Activated CD4-positive, alpha-beta T cell treated with anti-CD3 and anti-CD28 coated beads for 36 hours (primary cell): ENCODE measurements at regions of chr2 and their contacts with region 1.

Region 1: GRCh38 chr2:170409164-170409535 is 231.2 kb downstream of the MYO3B start:
- DNase-seq: peak; percentile 88
- ATAC-seq: peak; percentile 65
- H3K4me3 Mint-ChIP-seq: peak overlapping the region; percentile 11
- H3K27ac Mint-ChIP-seq: no peak overlapping the region
- H3K4me1 Mint-ChIP-seq: peaks cover 5% of the 10 kb centered on the region
- H3K27me3 Mint-ChIP-seq: peaks cover 16% of the 10 kb centered on the region

Region 2: DNA sequence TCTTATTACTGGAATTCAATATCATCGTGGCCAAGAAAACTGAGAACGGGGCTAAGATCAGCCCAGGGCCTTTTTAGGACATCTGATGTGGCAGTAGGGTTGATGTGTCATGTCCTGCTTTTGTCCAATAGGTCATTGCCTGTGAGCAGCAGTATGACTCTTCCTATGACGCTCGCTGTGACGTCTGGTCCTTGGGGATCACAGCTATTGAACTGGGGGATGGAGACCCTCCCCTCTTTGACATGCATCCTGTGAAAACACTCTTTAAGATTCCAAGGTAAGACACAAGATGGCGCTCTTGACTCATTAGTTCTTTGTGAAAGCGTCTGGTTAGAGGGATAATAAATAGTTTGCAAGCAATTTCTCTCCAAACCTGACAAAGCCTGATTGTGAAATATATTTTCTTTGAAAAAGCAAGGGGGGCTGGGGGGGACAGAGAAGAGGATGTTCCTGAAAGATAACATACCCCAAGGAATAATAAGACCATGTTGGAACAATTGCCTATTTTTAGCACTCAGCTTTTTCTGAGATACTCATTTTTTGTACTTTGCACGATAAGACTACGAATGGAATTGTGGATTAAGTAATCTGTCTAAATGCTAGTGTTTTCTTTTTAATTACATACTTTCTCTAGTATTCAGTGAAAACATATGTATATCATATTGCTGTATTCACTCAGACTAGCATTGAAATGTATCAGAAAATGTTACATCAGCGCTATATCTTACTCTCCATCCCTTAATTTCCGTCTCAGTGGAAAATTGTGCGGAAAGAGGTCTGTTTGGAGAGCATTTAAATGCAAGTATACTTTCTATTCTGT is 173.1 kb before region 1 on chr2:
- CTCF ChIA-PET with region 1: no interaction called
- POLR2A ChIA-PET with region 1: no interaction called
- intact Hi-C with region 1: loop called in 1 of 2 experiments (anchors 2 kb)
- DNase-seq: peak; percentile 46
- ATAC-seq: peak; percentile 63
- H3K4me3 Mint-ChIP-seq: no peak overlapping the region
- H3K27ac Mint-ChIP-seq: no peak overlapping the region
- H3K4me1 Mint-ChIP-seq: no peaks in the 10 kb centered on the region
- H3K27me3 Mint-ChIP-seq: peaks cover 15% of the 10 kb centered on the region

Region 3: GRCh38 chr2:170369894-170370293 is 39.3 kb before region 1 on chr2:
- CTCF ChIA-PET with region 1: interaction called, 13 read pairs
- POLR2A ChIA-PET with region 1: no interaction called
- intact Hi-C with region 1: no loop called
- DNase-seq: no peak
- ATAC-seq: no peak
- H3K4me3 Mint-ChIP-seq: no peak overlapping the region
- H3K27ac Mint-ChIP-seq: no peak overlapping the region
- H3K4me1 Mint-ChIP-seq: peaks cover 42% of the 10 kb centered on the region
- H3K27me3 Mint-ChIP-seq: peaks cover 28% of the 10 kb centered on the region

Region 4: DNA sequence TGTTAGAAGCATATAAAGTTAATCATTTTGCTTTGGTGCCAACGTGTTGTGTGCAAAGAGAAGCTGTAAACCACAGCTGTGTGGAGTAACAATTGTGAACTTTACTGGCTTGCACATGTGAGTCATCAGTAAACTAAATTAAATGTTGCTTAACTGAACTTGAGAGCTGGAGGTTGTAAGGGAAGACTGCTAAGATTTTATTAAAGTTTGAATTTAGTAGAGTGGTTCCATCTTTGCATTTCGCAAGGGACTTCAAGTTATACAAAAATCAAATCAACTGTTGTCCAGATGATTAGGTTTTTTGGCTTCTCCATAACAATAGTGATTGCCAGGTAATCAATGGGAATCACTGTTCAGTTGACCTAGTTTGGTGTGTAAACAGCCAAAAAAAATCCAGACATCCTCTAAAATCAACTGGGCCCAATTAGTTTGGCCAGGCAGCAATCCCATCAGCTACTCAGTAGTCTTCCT is 16.2 kb after region 1 on chr2:
- CTCF ChIA-PET with region 1: interaction called, 21 read pairs
- POLR2A ChIA-PET with region 1: no interaction called
- intact Hi-C with region 1: no loop called
- DNase-seq: no peak
- ATAC-seq: no peak
- H3K4me3 Mint-ChIP-seq: no peak overlapping the region
- H3K27ac Mint-ChIP-seq: no peak overlapping the region
- H3K4me1 Mint-ChIP-seq: no peaks in the 10 kb centered on the region
- H3K27me3 Mint-ChIP-seq: peaks cover 6% of the 10 kb centered on the region